Ovary (tissue), 10 donors: ENCODE measurements at regions of chr13 and their contacts with region 1.

Region 1: DNA sequence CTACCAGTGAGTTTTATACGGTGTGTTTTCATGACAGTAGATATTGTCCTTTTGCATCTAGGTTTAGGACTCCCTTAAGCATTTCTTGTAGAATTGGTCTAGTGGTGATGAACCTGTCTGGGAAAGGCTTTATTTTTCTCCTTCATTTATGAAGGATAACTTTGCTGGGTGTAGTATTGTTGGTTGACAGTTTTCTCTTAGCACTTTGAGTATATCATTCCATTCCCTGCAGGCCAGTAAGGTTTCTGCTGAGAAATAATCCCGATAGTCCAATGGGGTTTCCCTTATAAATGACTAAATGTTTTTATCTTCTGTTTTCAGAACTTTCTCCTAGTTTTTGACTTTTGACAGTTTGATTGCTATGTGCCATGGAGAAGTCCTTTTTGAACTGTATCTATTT is 57.2 kb downstream of the DNAJC3 start:
- DNase-seq: no peak
- H3K4me3 ChIP-seq: no peak overlapping the region
- H3K27ac ChIP-seq: no peak overlapping the region
- H3K4me1 ChIP-seq: no peaks in the 10 kb centered on the region
- H3K27me3 ChIP-seq: no peaks in the 10 kb centered on the region
- CTCF ChIP-seq: no peak
- EP300 ChIP-seq: no peak
- POLR2A ChIP-seq: no peak

Region 2: DNA sequence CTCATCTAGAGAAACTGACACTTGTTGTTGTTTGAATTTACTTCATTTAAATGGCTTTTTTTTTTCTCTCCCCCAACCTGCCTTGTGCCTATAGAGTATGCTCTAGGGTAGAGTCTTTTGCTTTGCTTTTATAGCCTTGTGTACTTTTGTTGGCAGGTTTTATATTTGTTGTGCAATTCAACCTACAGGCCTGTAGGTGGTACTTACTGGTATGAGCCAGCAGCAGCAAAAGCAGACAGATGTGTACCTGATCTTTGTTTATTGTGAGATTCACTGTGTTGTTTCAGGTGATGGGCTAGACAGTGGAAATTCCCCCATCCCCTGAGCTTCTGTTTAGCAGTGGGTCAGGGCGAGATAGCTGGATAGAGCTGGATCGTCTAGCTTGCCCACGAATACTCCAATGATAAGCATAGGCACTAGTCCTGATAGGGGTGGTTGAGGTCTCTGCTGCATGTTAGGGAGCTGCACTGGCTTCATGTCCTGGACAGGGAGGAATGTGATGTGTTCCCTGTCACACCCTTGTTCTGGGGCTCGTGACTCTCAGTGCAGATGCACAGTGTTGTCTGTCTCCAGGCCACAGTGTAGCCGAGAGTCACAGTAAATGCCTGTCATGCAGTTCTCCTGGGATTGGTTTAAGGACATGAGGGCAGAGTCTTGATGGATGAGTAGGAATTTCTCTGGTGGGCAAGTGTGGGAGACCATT is 35.9 kb before region 1 on chr13:
- intact Hi-C with region 1: loop called in 1 of 4 experiments (anchors 5 kb)
- DNase-seq: no peak
- H3K4me3 ChIP-seq: no peak overlapping the region
- H3K27ac ChIP-seq: no peak overlapping the region
- H3K4me1 ChIP-seq: no peaks in the 10 kb centered on the region
- H3K27me3 ChIP-seq: no peaks in the 10 kb centered on the region
- CTCF ChIP-seq: no peak
- EP300 ChIP-seq: no peak
- POLR2A ChIP-seq: no peak